A549 (cell line): ENCODE measurements at regions of chr12 and their contacts with region 1.

Region 1: DNA sequence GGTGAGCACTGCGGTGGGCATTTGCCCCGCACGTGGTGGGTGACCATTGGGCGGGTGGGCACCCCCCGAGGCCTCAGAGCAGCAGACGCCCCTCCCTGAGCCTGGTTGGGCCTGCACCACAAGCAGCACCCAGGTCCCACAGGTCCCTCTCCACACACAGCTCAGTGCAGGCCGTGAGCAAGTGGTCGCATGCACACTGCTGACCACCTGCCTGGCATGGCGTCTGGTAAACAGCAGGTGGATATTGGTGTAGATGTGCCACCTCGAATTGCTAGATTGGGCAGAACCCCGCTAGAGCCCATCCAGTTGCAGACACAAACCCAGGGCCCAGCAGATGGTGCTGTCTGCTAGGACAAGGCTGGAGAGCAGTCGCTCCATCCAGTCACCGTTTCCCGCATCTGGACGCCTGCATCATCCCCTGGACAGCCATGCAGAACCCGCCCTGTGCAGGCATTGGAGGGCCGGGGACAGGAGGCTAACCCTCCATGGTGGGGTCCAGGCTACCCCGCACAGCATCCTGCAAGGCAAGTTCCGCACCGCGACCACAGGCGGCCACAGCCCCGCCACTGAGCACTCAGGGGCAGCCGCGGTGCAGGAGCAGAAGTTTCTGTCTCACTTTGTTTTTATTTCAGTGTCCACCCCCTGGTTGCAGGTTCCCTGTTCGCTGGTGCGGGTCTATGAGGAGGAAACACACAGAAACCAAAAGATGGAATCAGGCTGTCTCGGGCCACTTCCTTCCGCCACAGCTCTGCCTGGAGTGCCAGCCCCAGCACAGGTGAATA is 45.6 kb upstream of the RIMBP2 start:
- DNase-seq: peak; percentile 72 to 82
- ATAC-seq: peak; percentile 87 to 94
- H3K4me3 ChIP-seq: no peak overlapping the region
- H3K27ac ChIP-seq: no peak overlapping the region
- H3K4me1 ChIP-seq: no peaks in the 10 kb centered on the region
- CTCF ChIP-seq: peak; percentile 60
- EP300 ChIP-seq: no peak
- POLR2A ChIP-seq: no peak
- RAD21 ChIP-seq: peak; percentile 81 to 91

Region 2: DNA sequence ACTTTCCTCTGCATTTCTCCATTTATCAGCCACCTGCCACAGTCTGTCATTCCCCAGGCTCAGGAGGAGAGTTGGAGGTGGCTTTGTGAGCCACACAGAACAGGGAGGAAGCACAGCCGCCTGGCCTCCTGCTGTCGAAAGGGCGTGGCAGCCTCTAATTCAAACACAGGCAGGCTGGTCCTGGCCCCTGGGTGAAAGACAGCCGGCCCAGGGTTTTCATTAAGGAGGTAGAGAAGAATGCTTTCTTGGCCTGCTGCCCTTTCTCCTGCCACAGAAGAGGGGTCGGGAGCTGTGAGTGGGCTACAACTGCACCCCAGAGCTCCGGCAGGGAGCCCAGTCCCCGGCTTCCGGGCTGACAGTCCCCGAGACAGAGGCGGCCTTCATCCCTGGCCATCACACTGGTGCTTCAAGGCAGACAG is 708.1 kb before region 1 on chr12:
- CTCF ChIA-PET with region 1: no interaction called
- POLR2A ChIA-PET with region 1: no interaction called
- DNase-seq: peak; percentile 12 to 19
- ATAC-seq: peak; percentile 41 to 64; a peak in 3 of 6 replicates
- H3K4me3 ChIP-seq: no peak overlapping the region
- H3K27ac ChIP-seq: no peak overlapping the region
- H3K4me1 ChIP-seq: no peaks in the 10 kb centered on the region
- CTCF ChIP-seq: no peak
- EP300 ChIP-seq: no peak
- POLR2A ChIP-seq: no peak
- RAD21 ChIP-seq: no peak

Region 3: DNA sequence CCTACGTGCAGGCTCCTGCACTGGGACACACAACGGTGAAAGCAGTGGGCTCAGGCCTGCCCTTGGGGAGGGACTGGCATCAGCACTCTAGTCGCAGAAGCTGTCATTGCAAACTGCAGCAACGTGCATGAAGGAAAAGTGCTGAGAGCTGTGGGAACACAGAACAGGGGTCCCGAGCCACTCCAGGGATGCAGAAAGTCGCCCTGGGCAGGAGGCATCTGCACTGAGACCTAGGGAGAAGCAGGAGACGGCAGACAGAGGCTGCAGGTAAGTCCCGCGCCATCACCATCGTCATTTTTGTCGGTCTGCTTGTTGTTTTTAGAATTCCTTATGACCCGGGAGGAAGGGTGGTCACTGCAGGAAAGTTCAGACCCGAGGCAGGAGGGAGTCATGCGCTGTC is 24.0 kb before region 1 on chr12:
- CTCF ChIA-PET with region 1: no interaction called
- POLR2A ChIA-PET with region 1: no interaction called
- DNase-seq: no peak
- ATAC-seq: no peak
- H3K4me3 ChIP-seq: no peak overlapping the region
- H3K27ac ChIP-seq: no peak overlapping the region
- H3K4me1 ChIP-seq: no peaks in the 10 kb centered on the region
- CTCF ChIP-seq: no peak
- EP300 ChIP-seq: no peak
- POLR2A ChIP-seq: no peak
- RAD21 ChIP-seq: no peak

Region 4: GRCh38 chr12:130747867-130748740 is 13.6 kb before region 1 on chr12:
- CTCF ChIA-PET with region 1: interaction called, 46 read pairs
- POLR2A ChIA-PET with region 1: no interaction called
- DNase-seq: peak; percentile 58 to 66
- ATAC-seq: peak; percentile 93 to 98
- H3K4me3 ChIP-seq: no peak overlapping the region
- H3K27ac ChIP-seq: no peak overlapping the region
- H3K4me1 ChIP-seq: no peaks in the 10 kb centered on the region
- CTCF ChIP-seq: peak; percentile 85
- EP300 ChIP-seq: no peak
- POLR2A ChIP-seq: no peak
- RAD21 ChIP-seq: peak; percentile 86 to 97

Region 5: GRCh38 chr12:130818635-130819576 is 57.2 kb after region 1 on chr12:
- CTCF ChIA-PET with region 1: interaction called, 20 read pairs
- POLR2A ChIA-PET with region 1: no interaction called
- DNase-seq: peak; percentile 49 to 91
- ATAC-seq: peak; percentile 97 to 100
- H3K4me3 ChIP-seq: no peak overlapping the region
- H3K27ac ChIP-seq: peak overlapping the region in 1 of 2 experiments; percentile 64; a peak in 2 of 6 replicates
- H3K4me1 ChIP-seq: 0 out of 3 replicates have a peak, but pooled peaks cover 3% of the 10 kb centered on the region
- CTCF ChIP-seq: peak; percentile 94
- EP300 ChIP-seq: no peak
- POLR2A ChIP-seq: no peak
- RAD21 ChIP-seq: peak; percentile 41 to 59

Region 6: GRCh38 chr12:130847112-130847511 is 85.4 kb after region 1 on chr12:
- CTCF ChIA-PET with region 1: no interaction called
- POLR2A ChIA-PET with region 1: no interaction called
- DNase-seq: no peak
- ATAC-seq: no peak
- H3K4me3 ChIP-seq: no peak overlapping the region
- H3K27ac ChIP-seq: no peak overlapping the region
- H3K4me1 ChIP-seq: peaks cover 10% of the 10 kb centered on the region; the same call in 1 of the 3 replicates
- CTCF ChIP-seq: no peak
- EP300 ChIP-seq: no peak
- POLR2A ChIP-seq: no peak
- RAD21 ChIP-seq: no peak

Region 7: DNA sequence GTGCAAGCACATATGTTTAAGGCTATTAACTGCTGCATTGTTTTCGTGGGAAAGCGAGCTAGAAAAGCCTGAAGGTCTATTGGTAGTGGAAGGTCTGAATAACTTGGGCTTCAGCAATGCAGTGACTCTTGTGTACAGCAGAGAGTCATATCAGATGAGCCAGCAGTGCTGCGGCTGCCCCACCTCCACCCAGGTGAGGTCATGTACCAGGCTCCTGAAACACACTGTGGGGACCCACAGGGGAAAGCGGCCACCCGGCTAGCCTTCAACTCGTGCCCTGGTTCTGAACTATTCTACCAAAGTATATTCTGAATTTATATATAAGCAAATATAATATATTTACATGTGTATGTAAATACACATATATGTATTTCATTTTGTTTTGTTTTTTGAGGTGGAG is 97.4 kb after region 1 on chr12:
- CTCF ChIA-PET with region 1: no interaction called
- POLR2A ChIA-PET with region 1: no interaction called
- DNase-seq: no peak
- ATAC-seq: no peak
- H3K4me3 ChIP-seq: no peak overlapping the region
- H3K27ac ChIP-seq: no peak overlapping the region
- H3K4me1 ChIP-seq: no peaks in the 10 kb centered on the region
- CTCF ChIP-seq: no peak
- EP300 ChIP-seq: no peak
- POLR2A ChIP-seq: no peak
- RAD21 ChIP-seq: no peak